G401 (cell line): ENCODE measurements at regions of chr1 and their contacts with region 1.

Region 1: GRCh38 chr1:17606826-17607440 is 67.4 kb downstream of the ARHGEF10L start:
- DNase-seq: peak; percentile 83

Region 2: DNA sequence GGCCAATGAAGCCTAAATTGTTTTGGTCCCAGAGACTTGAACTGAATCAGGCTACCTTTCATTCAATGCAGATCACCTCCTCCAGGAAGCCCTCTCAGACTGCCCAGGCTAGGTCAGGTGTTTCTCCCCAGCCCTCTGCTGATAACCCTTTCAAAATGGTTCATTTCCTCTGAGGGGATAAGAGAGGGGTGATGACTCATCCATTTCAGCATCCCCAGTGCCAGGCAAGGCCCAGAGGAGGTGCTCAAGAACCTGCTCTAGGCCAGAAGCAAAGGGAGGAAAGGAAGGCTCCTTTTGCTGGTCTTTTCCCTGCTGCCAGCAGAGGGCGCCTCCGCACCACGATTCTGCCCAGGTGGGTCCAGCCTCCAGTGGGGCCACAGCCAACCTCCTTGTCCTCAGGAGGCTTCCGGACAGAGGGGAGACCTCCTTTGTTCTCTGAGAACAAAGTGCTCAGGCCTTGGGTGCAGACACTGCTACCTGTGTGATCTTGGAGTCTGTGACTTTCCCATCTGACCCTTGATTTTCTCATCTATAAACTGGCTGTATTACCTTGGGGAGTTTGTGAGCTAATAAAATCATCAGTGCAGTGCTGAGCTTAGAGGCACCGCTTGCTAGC is 112.7 kb before region 1 on chr1:
- in situ Hi-C with region 1: loop called (anchors 10 kb)
- DNase-seq: peak; percentile 79

Region 3: DNA sequence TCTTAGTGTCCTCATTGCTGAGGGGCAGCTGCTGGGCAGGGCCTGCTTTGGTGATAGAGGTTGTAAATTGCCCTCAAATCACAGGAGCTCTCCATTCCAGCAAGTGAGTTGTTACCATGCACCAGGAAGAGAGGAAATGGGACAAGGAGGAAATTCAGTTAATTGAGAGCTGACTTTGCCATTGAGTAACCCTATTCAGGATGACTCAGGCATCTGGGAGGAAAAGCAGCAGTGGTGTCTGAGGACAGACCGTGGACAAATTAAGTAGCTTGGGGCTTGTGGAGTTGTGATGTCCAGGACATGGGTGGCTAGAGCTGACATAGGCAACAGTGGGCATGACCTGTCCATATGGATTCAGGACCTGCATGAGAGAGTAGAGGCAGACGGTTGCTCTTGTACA is 61.6 kb before region 1 on chr1:
- in situ Hi-C with region 1: loop called (anchors 5 kb)
- DNase-seq: no peak